ENCODE measurements at regions of chr9 and their contacts with region 1.

Region 1: DNA sequence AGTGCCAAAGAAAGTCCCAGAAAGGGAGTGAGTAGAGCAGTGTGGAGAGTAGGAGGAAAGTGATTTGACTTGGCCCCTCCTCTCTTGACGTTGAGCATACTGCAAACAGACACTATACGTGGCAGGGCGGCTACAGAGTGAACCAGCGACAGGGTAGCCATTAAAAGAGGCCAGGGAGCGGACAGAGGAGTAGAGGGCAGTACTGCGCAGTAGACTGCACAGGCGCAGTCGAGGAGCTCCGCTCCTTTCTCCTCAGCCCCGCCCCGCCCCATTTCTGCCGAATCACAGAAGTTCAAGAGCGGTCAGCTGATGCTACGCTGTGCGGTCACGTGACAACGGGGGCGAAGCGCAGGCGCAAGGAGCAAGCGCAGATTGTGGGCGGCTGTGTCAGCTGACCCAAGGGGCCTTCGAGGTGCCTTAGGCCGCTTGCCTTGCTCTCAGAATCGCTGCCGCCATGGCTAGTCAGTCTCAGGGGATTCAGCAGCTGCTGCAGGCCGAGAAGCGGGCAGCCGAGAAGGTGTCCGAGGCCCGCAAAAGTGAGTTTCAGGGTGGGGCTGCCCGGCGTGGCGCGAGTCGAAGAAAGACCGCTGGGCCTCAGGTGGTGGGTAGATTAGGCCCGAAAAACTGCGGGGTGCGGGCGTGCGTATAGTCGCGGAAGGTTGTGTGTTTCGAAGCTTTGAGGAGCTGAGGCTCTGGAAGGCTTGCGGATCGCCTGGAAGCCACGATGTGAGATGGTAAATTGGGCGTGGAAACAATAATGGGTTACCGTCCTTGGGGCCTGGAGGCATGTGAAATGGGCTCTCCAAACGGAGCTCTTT is at the start of gene ATP6V1G1:
- DNase-seq: peak; percentile 99
- ATAC-seq: peak; percentile 99
- H3K4me3 ChIP-seq: peak within 1 kb of the TSS; percentile 75
- H3K27ac ChIP-seq: peak within 1 kb of the TSS; percentile 84
- H3K4me1 ChIP-seq: peaks cover 7% of the 10 kb centered on the region; the same call in 1 of the 2 replicates
- H3K27me3 ChIP-seq: no peaks in the 10 kb centered on the region
- CTCF ChIP-seq: 0 out of 2 replicates have a peak, but pooled peaks have one; percentile 13
- POLR2A ChIP-seq: peak; percentile 95
- RAD21 ChIP-seq: peak; percentile 9; the same call in 1 of the 2 replicates
- total RNA-seq, gene ATP6V1G1: 52.0 and 80.3 TPM in 2 replicates

Region 2: DNA sequence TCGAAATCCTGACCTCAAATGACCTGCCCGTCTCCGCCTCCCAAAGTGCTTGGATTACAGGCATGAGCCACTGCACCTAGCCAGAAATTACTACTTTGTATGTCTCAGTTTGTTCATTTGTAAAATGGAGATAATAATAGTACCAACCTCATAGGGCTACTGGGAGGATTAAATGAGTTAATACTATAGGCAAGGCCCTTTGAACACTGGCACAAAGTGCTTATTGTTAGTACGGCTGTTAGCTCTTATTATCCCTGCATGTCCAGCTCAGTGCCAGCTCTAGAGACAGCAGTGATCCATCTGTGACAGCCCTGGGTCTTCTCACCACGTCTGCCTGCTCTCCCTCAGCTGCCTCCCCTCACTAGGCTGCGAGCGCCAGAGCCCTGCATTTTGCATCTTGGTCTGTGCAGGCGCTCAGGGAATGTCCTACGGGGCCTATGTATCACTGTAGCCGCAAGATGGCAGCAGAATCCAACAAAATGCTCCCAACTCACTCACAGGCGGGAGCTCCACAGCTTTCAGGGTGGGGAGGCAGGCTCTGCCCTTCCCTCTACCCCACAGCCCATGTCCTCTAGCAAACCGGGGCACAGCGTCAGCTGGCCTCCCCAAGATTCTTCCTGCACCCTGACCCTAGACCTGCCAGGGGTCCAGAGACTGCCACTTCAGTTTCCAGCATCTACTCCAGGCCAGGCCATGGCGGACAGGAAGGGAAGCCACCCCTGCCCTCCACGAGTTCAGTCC is 182.1 kb before region 1 on chr9:
- CTCF ChIA-PET with region 1: no interaction called
- POLR2A ChIA-PET with region 1: no interaction called
- dilution Hi-C with region 1: no loop called
- in situ Hi-C with region 1: no loop called
- intact Hi-C with region 1: loop called (anchors 5 kb)
- DNase-seq: peak; percentile 78
- ATAC-seq: peak; percentile 99
- H3K4me3 ChIP-seq: no peak overlapping the region
- H3K27ac ChIP-seq: no peak overlapping the region
- H3K4me1 ChIP-seq: no peaks in the 10 kb centered on the region
- H3K27me3 ChIP-seq: peaks cover 5% of the 10 kb centered on the region; the same call in 1 of the 2 replicates
- CTCF ChIP-seq: peak; percentile 93
- POLR2A ChIP-seq: no peak
- RAD21 ChIP-seq: peak; percentile 95

Region 3: DNA sequence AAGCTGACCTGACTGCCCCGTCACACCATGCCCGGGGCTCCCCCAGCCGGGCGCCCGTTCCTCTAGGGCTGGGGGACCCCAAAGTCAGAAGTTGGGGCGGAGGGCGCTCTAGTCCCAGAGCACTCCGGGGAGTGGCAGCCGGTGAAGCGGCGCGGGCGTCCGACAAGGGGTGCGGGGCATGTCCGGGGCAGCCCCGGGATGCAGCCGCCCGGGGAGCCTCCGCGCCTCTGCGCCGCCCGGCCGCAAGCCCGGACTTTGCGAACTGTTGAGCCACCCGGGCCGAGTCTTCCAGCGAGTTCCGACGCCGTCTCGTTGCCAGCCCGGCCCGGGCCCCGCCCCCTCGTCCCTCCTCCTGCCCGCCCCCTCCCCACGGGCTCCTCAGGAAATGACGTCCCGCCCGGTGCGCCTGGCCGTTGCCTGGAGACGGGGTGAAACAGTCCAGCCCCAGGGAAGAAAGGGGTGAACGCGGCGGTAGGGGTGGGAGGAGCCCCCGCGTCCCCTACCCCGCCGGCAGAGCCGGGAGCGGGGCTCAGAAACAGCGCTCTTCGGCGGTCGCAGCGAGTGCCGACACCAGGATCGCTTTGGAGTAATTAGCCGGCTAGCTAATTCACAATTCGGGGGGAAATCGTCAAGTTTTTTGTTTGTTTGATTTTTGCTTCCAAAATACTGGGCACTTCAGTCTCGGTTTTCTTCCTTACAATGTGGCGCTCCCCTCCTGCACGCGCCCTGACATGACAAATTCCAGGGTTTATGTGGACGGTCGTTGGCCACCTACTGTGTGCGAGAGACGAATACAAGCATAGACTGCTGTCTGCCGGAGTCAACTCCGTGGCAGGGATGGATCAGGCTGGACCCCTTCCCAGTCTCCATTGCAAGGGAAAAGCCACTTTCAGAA is 82.2 kb before region 1 on chr9 and contains the start of gene WHRN:
- CTCF ChIA-PET with region 1: no interaction called
- POLR2A ChIA-PET with region 1: interaction called, 3 read pairs
- dilution Hi-C with region 1: no loop called
- in situ Hi-C with region 1: no loop called
- intact Hi-C with region 1: loop called (anchors 1 kb)
- DNase-seq: peak; percentile 76
- ATAC-seq: peak; percentile 83
- H3K4me3 ChIP-seq: peak within 1 kb of the TSS; percentile 71
- H3K27ac ChIP-seq: no peak within 1 kb of the TSS
- H3K4me1 ChIP-seq: peaks cover 11% of the 10 kb centered on the region
- H3K27me3 ChIP-seq: peaks cover 36% of the 10 kb centered on the region
- CTCF ChIP-seq: peak; percentile 11; the same call in 1 of the 2 replicates
- POLR2A ChIP-seq: peak; percentile 87
- RAD21 ChIP-seq: no peak
- total RNA-seq, gene WHRN: 0.18 and 0.28 TPM in 2 replicates

Region 4: GRCh38 chr9:114570742-114571141 is 16.9 kb before region 1 on chr9:
- CTCF ChIA-PET with region 1: no interaction called
- POLR2A ChIA-PET with region 1: interaction called, 14 read pairs
- dilution Hi-C with region 1: no loop called
- in situ Hi-C with region 1: no loop called
- intact Hi-C with region 1: no loop called
- DNase-seq: no peak
- ATAC-seq: no peak
- H3K4me3 ChIP-seq: no peak overlapping the region
- H3K27ac ChIP-seq: no peak overlapping the region
- H3K4me1 ChIP-seq: peaks cover 2% of the 10 kb centered on the region; the same call in 1 of the 2 replicates
- H3K27me3 ChIP-seq: peaks cover 4% of the 10 kb centered on the region
- CTCF ChIP-seq: no peak
- POLR2A ChIP-seq: no peak
- RAD21 ChIP-seq: no peak

Region 5: GRCh38 chr9:114611516-114612271 is 24.1 kb after region 1 on chr9:
- CTCF ChIA-PET with region 1: no interaction called
- POLR2A ChIA-PET with region 1: interaction called, 6 read pairs
- dilution Hi-C with region 1: no loop called
- in situ Hi-C with region 1: no loop called
- intact Hi-C with region 1: loop called (anchors 2 kb)
- DNase-seq: peak; percentile 58
- ATAC-seq: peak; percentile 84
- H3K4me3 ChIP-seq: peak overlapping the region; percentile 56
- H3K27ac ChIP-seq: peak overlapping the region; percentile 76
- H3K4me1 ChIP-seq: peaks cover 19% of the 10 kb centered on the region
- H3K27me3 ChIP-seq: no peaks in the 10 kb centered on the region
- CTCF ChIP-seq: no peak
- POLR2A ChIP-seq: peak; percentile 20; the same call in 1 of the 2 replicates
- RAD21 ChIP-seq: no peak